CD4-positive, alpha-beta T cell (primary cell): ENCODE measurements at regions of chr5 and their contacts with region 1.

Region 1: DNA sequence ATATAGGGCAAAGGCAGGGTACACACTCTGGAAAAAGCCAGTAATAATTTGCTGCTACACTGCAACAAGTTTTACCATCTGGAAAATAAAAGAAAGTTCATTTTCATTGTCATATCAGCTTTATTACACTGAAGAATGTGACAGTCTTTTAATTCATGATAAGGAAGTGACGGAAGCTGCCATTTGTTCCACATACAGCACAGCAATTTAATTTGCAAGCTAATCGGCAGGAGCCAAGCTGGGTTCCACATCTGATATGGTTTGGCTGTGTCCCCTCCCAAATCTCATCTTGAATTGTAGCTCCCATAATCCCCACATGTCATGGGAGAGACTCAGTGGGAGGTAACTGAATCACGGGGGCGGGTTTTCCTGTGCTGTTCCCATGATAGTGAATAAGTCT is 16.5 kb downstream of the PRELID2 start:
- DNase-seq: no peak
- ATAC-seq: no peak
- H3K4me3 ChIP-seq: no peak overlapping the region
- H3K4me3 Mint-ChIP-seq: no peak overlapping the region
- H3K27ac ChIP-seq: no peak overlapping the region
- H3K27ac Mint-ChIP-seq: no peak overlapping the region
- H3K4me1 ChIP-seq: no peaks in the 10 kb centered on the region
- H3K4me1 Mint-ChIP-seq: no peaks in the 10 kb centered on the region
- H3K27me3 ChIP-seq: no peaks in the 10 kb centered on the region
- H3K27me3 Mint-ChIP-seq: no peaks in the 10 kb centered on the region
- CTCF ChIP-seq: no peak

Region 2: DNA sequence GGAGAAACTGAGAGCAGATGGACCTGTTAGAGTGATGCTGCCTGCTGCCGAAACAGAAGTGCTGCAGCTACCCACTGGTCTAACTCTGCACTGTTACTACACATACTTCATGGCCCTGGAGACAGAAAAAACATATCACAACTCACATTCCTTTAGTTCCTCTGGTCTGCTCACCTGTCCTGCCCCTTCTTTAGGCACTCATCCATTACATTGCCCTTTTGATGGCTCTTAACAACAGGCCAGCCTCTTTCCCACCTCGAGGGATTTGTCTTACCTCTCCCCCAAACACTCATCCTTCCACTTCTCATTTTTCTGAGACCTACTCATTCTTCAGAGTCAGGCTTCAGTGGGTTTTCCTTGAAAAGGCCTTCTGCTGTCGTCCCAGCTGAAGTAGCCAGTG is 1598.7 kb before region 1 on chr5:
- CTCF ChIA-PET with region 1: no interaction called
- POLR2A ChIA-PET with region 1: no interaction called
- intact Hi-C with region 1: loop called in 1 of 2 experiments (anchors 5 kb)
- DNase-seq: no peak
- ATAC-seq: no peak
- H3K4me3 ChIP-seq: no peak overlapping the region
- H3K4me3 Mint-ChIP-seq: no peak overlapping the region
- H3K27ac ChIP-seq: no peak overlapping the region
- H3K27ac Mint-ChIP-seq: no peak overlapping the region
- H3K4me1 ChIP-seq: no peaks in the 10 kb centered on the region
- H3K4me1 Mint-ChIP-seq: no peaks in the 10 kb centered on the region
- H3K27me3 ChIP-seq: peaks cover 3 to 4% of the 10 kb centered on the region in 2 experiments
- H3K27me3 Mint-ChIP-seq: peaks cover 15% of the 10 kb centered on the region
- CTCF ChIP-seq: no peak

Region 3: GRCh38 chr5:145774442-145774841 is 44.2 kb before region 1 on chr5:
- CTCF ChIA-PET with region 1: no interaction called
- POLR2A ChIA-PET with region 1: no interaction called
- intact Hi-C with region 1: no loop called
- DNase-seq: no peak
- ATAC-seq: no peak
- H3K4me3 ChIP-seq: no peak overlapping the region
- H3K4me3 Mint-ChIP-seq: no peak overlapping the region
- H3K27ac ChIP-seq: no peak overlapping the region
- H3K27ac Mint-ChIP-seq: no peak overlapping the region
- H3K4me1 ChIP-seq: no peaks in the 10 kb centered on the region
- H3K4me1 Mint-ChIP-seq: no peaks in the 10 kb centered on the region
- H3K27me3 ChIP-seq: no peaks in the 10 kb centered on the region
- H3K27me3 Mint-ChIP-seq: no peaks in the 10 kb centered on the region
- CTCF ChIP-seq: no peak

Region 4: DNA sequence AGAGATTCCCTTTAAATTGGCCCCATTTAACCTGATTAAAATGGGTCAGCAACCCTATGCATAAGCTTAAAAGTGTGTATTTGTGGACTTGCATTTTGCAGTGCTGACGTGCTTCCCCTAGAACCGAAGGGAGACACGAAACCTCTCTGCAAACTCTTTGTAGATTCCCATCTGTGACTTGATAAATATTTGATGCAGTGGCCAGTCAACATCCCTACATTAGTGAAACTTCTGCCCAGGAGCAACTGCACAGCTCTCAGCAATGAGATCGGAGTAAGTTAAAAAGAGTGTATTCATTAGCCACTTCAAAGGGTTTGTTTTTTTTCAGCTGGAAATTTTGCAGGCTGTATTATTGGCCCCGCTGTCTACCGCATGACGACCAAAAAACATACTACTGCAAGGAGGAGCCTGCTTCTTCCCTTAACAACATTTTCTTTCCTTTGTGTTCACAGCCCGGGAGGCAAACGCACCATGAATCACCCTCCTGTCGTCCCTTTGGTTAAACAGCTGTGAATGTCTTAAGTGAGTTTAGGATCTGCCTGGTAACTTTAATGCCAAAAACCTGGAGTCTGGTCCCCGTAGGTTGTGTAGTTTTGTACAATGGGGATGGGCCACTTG is 590.6 kb after region 1 on chr5:
- CTCF ChIA-PET with region 1: no interaction called
- POLR2A ChIA-PET with region 1: no interaction called
- intact Hi-C with region 1: no loop called
- DNase-seq: no peak
- ATAC-seq: no peak
- H3K4me3 ChIP-seq: no peak overlapping the region
- H3K4me3 Mint-ChIP-seq: no peak overlapping the region
- H3K27ac ChIP-seq: no peak overlapping the region
- H3K27ac Mint-ChIP-seq: no peak overlapping the region
- H3K4me1 ChIP-seq: no peaks in the 10 kb centered on the region
- H3K4me1 Mint-ChIP-seq: no peaks in the 10 kb centered on the region
- H3K27me3 ChIP-seq: peaks cover 0 to 4% of the 10 kb centered on the region in 2 experiments
- H3K27me3 Mint-ChIP-seq: peaks cover 7% of the 10 kb centered on the region
- CTCF ChIP-seq: no peak